PC-9 (cell line): ENCODE measurements at regions of chr7 and their contacts with region 1.

Region 1: DNA sequence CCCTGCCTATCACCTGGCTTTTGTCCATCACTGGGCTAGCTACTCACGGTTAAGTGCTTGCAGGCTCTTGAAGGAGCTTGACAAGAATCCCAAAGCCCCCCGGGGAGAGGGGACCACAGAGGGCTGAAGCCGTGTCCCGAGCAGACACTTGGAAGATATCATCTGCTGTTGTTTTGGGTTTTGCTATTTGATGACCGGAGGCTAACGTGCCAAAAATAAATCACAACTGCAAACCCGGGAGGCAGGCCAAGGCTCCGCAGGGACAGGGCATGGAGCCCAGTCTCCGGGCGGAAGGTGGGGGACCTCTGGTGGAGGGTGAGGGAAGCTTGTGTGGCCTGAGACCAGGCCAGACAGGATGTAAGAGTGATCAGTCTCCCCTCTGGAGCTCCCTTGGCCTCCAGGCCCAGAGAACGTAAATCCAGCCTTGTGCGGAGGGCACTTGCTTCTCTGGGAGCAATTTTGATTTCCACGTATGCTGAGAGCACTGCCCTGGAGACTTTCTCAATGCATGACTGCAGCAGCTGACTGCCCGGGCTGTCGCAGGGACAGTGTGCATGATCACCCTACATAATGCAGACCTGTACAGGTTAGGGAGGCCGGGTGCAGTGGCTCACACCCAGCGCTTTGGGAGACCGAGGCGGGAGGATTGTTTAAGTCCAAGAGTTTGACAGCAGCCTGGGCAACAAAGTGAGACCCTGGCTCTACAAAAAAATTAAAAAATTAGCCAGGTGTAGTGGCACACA is at the start of gene PHKG1:
- DNase-seq: peak in 1 of 2 experiments; percentile 52
- H3K4me3 ChIP-seq: no peak within 1 kb of the TSS
- H3K27ac ChIP-seq: no peak within 1 kb of the TSS
- H3K4me1 ChIP-seq: no peaks in the 10 kb centered on the region
- H3K27me3 ChIP-seq: no peaks in the 10 kb centered on the region
- CTCF ChIP-seq: 0 out of 2 replicates have a peak, but pooled peaks have one; percentile 40
- total RNA-seq, gene PHKG1: 2.7 and 3.9 TPM in 2 replicates

Region 2: GRCh38 chr7:55280031-55280454 is 812.9 kb before region 1 on chr7:
- CTCF ChIA-PET with region 1: no interaction called
- POLR2A ChIA-PET with region 1: no interaction called
- intact Hi-C with region 1: loop called (anchors 5 kb)
- DNase-seq: peak; percentile 72 to 74
- H3K4me3 ChIP-seq: no peak overlapping the region
- H3K27ac ChIP-seq: no peak overlapping the region
- H3K4me1 ChIP-seq: no peaks in the 10 kb centered on the region
- H3K27me3 ChIP-seq: peaks cover 54% of the 10 kb centered on the region
- CTCF ChIP-seq: peak; percentile 99

Region 3: GRCh38 chr7:56106108-56107073 is 13.4 kb after region 1 on chr7 and contains the start of gene CHCHD2:
- CTCF ChIA-PET with region 1: no interaction called
- POLR2A ChIA-PET with region 1: interaction called, 17 read pairs
- intact Hi-C with region 1: no loop called
- DNase-seq: peak; percentile 99 to 100
- H3K4me3 ChIP-seq: peak within 1 kb of the TSS; percentile 74
- H3K27ac ChIP-seq: peak within 1 kb of the TSS; percentile 73
- H3K4me1 ChIP-seq: peaks cover 25% of the 10 kb centered on the region
- H3K27me3 ChIP-seq: no peaks in the 10 kb centered on the region
- CTCF ChIP-seq: no peak
- total RNA-seq, gene CHCHD2: 978 and 1,041 TPM in 2 replicates